ENCODE measurements at regions of chr17 and their contacts with region 1.

Region 1: GRCh38 chr17:45135192-45135977 is at the start of gene ACBD4:
- DNase-seq: peak; percentile 95
- CTCF ChIP-seq: peak; percentile 100

Region 2: GRCh38 chr17:45060797-45061605 is 74.4 kb before region 1 on chr17 and contains the start of gene NMT1:
- CTCF ChIA-PET with region 1: interaction called, 23 read pairs
- POLR2A ChIA-PET with region 1: no interaction called
- DNase-seq: peak; percentile 92
- CTCF ChIP-seq: no peak

Region 3: DNA sequence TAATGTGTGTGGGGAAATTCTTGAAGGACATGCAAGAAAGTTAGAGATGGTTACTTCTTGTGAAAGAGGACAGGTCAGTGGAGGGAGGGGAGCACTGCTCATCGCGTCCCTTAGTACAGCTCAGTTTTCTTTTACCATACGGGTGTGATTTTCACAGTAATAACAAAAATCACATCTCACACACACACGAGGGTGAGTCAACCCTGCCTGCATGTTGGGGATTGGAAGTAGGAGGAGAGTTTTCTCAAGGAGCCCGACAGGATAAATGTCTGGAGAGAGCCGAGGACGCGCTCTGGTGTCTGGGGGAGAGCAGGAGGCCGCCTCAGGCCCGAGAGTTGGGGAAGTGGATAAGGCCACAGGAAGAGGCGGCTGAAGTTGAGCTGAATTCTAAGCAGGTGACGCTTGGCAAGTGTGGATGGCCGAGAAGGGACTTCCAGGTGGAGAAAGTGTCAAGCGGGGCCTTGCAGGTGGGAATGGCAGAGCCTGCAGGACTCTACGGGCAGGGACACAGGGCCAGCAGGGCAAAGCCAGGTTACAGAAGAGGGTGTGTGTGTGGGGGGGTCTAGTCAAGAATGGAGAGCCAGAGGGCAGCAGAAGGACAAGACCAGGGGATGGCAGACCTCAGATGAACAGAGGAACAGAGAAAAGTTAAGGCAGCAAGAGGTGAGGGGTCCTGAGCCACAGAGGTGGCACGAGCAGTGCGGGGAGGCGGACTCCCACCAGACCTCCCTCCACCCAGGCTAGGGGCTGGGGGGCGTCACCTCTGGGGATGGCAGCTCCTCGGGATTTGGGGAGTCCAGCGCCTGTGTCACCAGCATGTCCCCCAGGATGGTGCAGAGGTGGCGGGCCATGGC is 19.3 kb before region 1 on chr17:
- CTCF ChIA-PET with region 1: interaction called, 21 read pairs
- POLR2A ChIA-PET with region 1: no interaction called
- DNase-seq: no peak
- CTCF ChIP-seq: no peak

Region 4: DNA sequence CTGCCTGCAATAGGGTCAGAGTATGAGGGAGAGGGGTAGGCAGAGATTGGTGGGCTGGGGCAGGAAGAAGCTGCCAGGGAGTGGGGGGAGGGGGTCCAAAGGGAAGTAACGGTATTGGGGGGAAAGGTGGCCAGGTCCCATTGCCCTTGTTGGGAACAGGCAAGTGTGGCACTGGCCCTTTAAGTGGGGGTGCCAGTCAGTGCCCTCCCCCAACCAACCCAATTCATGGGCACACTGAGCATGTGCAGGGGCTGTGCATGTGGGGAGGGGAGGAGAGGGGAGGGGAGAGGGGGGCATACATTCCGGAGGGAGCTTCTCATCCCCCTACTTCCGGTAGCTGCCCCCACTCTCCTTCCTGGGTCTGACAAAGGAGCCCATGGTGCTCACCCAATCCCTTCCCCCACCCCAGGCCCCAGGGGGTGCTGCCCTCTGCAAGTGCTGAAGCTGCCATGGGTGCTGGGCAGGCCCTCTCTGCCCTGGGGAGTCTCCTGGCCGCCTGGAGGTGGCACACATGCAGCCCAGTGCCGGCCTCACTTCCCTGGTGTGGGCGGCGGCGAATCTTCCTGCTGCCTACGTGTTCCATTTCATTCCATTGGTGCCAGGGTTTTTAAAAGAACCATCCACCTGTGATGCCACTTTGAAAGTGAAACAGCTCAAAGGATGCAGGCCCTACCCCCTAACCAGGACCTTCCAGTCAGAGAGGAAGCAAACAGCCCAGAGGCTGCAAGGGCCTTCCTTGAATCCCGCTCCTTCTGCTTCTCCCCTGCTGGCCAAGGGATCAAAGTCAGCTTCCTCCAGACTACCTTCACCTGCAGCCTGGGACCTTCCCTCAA is 37.3 kb after region 1 on chr17:
- CTCF ChIA-PET with region 1: interaction called, 41 read pairs
- POLR2A ChIA-PET with region 1: no interaction called
- DNase-seq: peak; percentile 56
- CTCF ChIP-seq: no peak

Region 5: DNA sequence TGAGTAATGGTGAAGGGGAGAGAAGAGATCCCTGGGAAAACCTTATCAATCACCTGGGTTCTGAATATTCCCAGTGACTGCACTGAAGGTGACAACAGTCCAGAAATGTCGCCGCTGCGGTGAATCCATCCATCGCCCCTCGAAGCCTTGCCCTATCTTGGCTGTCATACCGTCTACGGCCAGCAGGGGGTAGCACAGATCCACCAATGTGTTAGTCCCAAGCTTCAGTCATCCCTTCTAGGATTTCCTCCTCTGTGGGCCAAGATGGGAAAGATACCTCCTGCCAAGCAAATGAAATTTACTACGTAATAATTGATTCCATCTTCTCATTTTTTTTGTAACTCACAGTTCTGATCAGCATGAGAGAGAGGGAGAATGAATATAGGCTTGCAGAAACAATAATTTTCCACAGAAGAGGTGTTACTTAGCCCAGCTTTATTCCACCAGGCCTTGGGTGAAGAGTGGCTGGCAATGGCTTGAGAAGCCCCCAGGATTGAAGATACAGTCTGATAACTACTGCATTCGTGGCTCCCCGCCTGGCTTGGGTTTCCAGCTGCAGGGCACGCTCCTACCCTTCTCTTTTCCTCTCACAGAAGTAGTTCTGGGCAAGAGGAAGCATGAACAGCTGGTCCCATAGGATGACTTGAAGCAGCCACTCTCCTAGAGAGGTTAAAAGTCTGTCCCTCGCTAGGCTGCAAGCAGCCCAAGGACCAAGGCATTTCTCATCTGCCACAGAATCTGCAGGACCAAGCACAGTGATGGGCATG is 83.7 kb after region 1 on chr17:
- CTCF ChIA-PET with region 1: interaction called, 11 read pairs
- POLR2A ChIA-PET with region 1: interaction called, 4 read pairs
- DNase-seq: peak; percentile 74
- CTCF ChIP-seq: peak; percentile 94

Region 6: GRCh38 chr17:45325810-45326209 is 190.4 kb after region 1 on chr17:
- CTCF ChIA-PET with region 1: no interaction called
- POLR2A ChIA-PET with region 1: no interaction called
- DNase-seq: no peak
- CTCF ChIP-seq: no peak